Left lung (tissue), 14 donors: ENCODE measurements at regions of chr1 and their contacts with region 1.

Region 1: GRCh38 chr1:63501256-63501655 is 21.8 kb downstream of the ITGB3BP start:
- DNase-seq: no peak
- ATAC-seq: no peak
- H3K4me3 ChIP-seq: no peak overlapping the region
- H3K27ac ChIP-seq: no peak overlapping the region
- H3K4me1 ChIP-seq: no peaks in the 10 kb centered on the region
- H3K27me3 ChIP-seq: no peaks in the 10 kb centered on the region
- CTCF ChIP-seq: no peak

Region 2: DNA sequence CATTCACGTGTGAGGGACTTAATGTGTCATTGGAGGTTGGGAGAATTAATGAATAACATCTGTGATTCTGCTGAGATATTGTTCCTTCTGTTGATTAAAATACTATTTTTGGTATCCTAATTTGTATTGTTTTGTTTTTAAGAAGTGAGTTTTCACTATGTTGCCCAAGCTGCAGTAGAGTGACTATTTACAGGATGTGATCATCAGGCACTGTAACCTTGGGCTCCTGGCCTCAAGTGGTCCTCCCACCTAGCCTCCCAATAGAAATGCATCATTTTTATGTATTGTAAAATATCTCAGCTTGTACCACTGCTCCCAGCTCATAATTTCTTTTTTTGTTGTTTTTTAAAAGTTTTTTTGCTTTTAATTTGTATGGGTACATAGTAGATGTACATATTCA is 119.5 kb before region 1 on chr1:
- intact Hi-C with region 1: loop called in 1 of 2 experiments (anchors 10 kb)
- DNase-seq: no peak
- ATAC-seq: no peak
- H3K4me3 ChIP-seq: no peak overlapping the region
- H3K27ac ChIP-seq: no peak overlapping the region
- H3K4me1 ChIP-seq: no peaks in the 10 kb centered on the region
- H3K27me3 ChIP-seq: no peaks in the 10 kb centered on the region
- CTCF ChIP-seq: no peak

Region 3: GRCh38 chr1:63454269-63454668 is 47.0 kb before region 1 on chr1:
- intact Hi-C with region 1: no loop called
- DNase-seq: peak in 1 of 4 donors; percentile 7
- ATAC-seq: no peak
- H3K4me3 ChIP-seq: no peak overlapping the region
- H3K27ac ChIP-seq: no peak overlapping the region
- H3K4me1 ChIP-seq: no peaks in the 10 kb centered on the region
- H3K27me3 ChIP-seq: no peaks in the 10 kb centered on the region
- CTCF ChIP-seq: no peak

Region 4: DNA sequence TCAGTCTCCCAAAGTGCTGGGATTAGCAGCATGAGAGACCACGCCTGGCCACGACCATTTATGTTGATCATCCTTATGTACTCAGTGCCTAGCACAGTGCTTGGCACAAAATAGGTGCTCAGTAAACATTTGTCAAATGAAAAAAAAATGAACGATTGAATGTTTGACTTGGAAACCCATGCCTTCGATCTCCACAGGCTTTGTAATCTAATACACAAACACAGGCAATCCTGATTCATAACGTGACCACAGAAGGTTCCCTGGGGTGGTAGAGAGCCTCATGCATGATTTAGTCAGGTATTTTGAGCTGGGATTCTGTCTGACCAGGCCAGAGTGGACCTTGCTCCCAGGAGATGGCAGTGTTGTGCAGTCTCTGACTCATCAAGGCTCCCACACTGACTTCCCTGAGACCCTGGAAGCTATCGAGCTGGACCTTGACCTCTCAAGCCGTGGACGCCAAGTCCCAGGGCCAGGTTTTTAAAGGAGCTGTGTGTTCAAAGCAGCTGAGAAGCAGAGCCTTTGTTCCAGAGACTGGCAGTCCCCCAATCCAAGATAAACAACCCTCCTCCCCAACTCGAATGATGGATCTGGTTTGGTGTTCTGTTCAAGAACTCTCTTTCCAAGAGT is 173.1 kb after region 1 on chr1:
- intact Hi-C with region 1: no loop called
- DNase-seq: peak in 3 of 4 donors; percentile 60 to 96 (median 87)
- ATAC-seq: peak; percentile 93
- H3K4me3 ChIP-seq: no peak overlapping the region
- H3K27ac ChIP-seq: no peak overlapping the region
- H3K4me1 ChIP-seq: peaks cover 0 to 2% of the 10 kb centered on the region in 2 donors
- H3K27me3 ChIP-seq: no peaks in the 10 kb centered on the region
- CTCF ChIP-seq: peak; percentile 29 to 49